Transverse colon (tissue), 4 donors: ENCODE measurements at regions of chr14 and their contacts with region 1.

Region 1: GRCh38 chr14:31880935-31881334 is 196.2 kb upstream of the ARHGAP5 start:
- DNase-seq: peak; percentile 13
- H3K4me3 ChIP-seq: no peak overlapping the region
- H3K27ac ChIP-seq: no peak overlapping the region
- H3K4me1 ChIP-seq: no peaks in the 10 kb centered on the region
- H3K27me3 ChIP-seq: no peaks in the 10 kb centered on the region
- CTCF ChIP-seq: no peak
- EP300 ChIP-seq: no peak
- POLR2A ChIP-seq: no peak

Region 2: GRCh38 chr14:31611778-31612433 is 269.0 kb before region 1 on chr14:
- in situ Hi-C with region 1: loop called in 1 of 4 experiments (anchors 25 kb)
- intact Hi-C with region 1: no loop called
- DNase-seq: no peak
- H3K4me3 ChIP-seq: no peak overlapping the region
- H3K27ac ChIP-seq: no peak overlapping the region
- H3K4me1 ChIP-seq: no peaks in the 10 kb centered on the region
- H3K27me3 ChIP-seq: no peaks in the 10 kb centered on the region
- CTCF ChIP-seq: no peak
- EP300 ChIP-seq: no peak
- POLR2A ChIP-seq: no peak

Region 3: GRCh38 chr14:31920989-31921650 is 40.2 kb after region 1 on chr14:
- in situ Hi-C with region 1: no loop called
- intact Hi-C with region 1: loop called (anchors 1 kb)
- DNase-seq: no peak
- H3K4me3 ChIP-seq: no peak overlapping the region
- H3K27ac ChIP-seq: no peak overlapping the region
- H3K4me1 ChIP-seq: peaks cover 0 to under 1% (median 0%) of the 10 kb centered on the region in 4 donors
- H3K27me3 ChIP-seq: no peaks in the 10 kb centered on the region
- CTCF ChIP-seq: no peak
- EP300 ChIP-seq: no peak
- POLR2A ChIP-seq: no peak